PC-3 (cell line): ENCODE measurements at regions of chr7 and their contacts with region 1.

Region 1: DNA sequence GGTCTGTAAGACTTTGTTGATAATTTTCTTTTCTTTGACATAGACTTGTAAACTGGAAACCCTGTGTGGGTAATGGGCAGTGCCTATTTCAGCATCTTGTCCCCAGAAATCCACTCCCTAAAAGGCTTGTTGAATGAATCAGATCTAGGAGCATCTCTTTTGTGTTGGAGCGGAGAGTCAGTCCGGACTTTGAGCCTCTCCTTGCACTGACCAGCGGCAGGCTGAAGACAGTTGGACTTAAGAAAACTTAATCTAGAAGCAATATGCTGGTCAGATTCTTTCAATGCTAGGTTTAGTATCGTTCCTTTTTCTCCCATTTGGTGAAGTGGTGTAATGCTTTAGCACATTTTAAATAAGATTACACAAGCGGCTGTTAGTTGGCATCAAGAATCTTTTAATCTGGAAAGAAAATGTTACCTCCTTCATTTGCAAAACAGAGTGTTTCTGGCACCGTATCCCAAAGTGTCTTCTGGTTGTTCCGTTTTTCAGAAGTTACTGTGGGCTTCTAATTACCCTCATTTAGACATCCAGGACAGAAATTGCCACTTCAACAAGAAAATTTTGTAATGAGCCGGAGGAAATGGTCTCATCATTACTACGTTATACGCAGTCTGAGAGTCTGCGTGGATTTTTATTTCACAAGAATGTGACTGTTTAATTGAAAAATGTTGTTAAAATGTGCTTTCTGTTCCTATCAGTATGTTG is 74.7 kb downstream of the CUX1 start:
- DNase-seq: no peak
- ATAC-seq: no peak
- H3K4me3 ChIP-seq: no peak overlapping the region
- H3K27ac ChIP-seq: no peak overlapping the region
- H3K4me1 ChIP-seq: no peaks in the 10 kb centered on the region
- H3K27me3 ChIP-seq: no peaks in the 10 kb centered on the region
- CTCF ChIP-seq: no peak

Region 2: DNA sequence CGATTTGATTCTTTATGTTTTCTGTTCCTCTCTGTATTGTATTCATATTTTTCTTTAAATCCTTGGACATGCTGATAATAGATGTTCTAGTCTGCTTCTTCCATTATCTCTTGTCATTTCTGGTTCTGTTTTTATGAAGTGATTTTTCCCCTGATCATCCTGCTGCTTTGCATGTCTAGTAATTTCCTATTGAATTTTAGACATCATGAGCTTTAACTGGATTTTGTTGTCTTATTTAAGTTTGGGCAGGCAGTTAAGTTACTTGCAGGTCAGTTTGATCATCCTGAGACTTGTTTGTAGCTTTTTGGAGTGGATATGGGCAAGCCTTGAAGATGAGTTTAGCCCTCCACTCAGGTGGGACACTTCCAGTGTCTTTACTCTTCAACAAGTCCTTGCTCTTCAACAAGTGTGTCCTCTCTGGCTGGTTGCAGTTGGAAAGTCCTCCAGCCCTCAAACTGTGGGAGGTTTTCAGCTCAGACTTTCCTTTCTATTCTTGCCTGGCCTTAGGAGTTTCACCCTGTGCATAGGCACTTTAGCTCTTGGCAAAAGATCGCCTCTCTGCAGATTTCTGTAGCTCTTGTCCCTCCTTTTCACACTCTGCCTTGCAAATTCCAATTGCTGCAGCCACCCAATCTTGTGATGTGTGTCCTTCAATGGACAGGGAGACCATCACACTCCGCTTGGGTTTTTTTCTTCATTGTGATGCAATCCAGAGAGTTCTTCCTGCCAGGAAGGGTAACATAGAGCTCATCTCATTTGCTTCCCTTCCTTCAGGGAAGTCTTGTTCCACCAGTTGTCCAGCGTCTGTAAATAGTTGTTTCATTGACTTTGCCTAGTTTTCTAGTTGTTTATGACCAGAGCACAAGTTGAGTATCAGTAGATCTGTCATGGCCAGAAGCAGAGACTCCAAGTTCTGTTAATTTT is 197.3 kb after region 1 on chr7:
- CTCF ChIA-PET with region 1: no interaction called
- POLR2A ChIA-PET with region 1: interaction called, 18 read pairs
- intact Hi-C with region 1: no loop called
- DNase-seq: no peak
- ATAC-seq: no peak
- H3K4me3 ChIP-seq: no peak overlapping the region
- H3K27ac ChIP-seq: no peak overlapping the region
- H3K4me1 ChIP-seq: 0 out of 2 replicates have a peak, but pooled peaks cover 7% of the 10 kb centered on the region
- H3K27me3 ChIP-seq: no peaks in the 10 kb centered on the region
- CTCF ChIP-seq: no peak